OCI-LY7 (cell line): ENCODE measurements at regions of chr1 and their contacts with region 1.

Region 1: GRCh38 chr1:153572569-153573015 is 6.9 kb upstream of the S100A2 start:
- DNase-seq: peak; percentile 83
- H3K4me3 ChIP-seq: no peak overlapping the region
- H3K27ac ChIP-seq: no peak overlapping the region
- H3K4me1 ChIP-seq: peaks cover 17% of the 10 kb centered on the region
- CTCF ChIP-seq: peak; percentile 95

Region 2: DNA sequence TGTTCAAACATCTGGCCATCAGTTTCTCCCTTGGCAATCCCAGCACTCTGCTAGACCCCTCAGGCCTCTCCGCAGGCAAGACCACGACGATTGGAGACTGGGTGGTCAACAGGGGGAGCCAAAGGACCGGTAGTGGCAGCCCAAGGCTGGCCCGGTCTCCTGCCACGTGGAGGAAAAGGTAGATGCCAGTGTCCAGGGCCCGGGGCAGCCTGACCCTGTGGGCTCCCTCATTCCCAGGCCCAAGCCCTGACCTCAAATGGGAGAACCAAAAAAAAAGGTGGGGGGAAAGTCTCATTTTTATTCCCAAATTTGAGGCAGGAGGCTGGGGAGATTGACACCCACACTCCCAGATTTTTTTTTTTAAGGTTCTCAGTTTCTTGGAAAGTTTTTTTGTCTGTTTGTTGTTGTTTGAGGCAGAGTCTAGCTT is 61.6 kb before region 1 on chr1:
- CTCF ChIA-PET with region 1: interaction called, 3 read pairs
- POLR2A ChIA-PET with region 1: interaction called, 6 read pairs
- intact Hi-C with region 1: loop called (anchors 1 kb)
- DNase-seq: peak; percentile 77
- H3K4me3 ChIP-seq: no peak overlapping the region
- H3K27ac ChIP-seq: no peak overlapping the region
- H3K4me1 ChIP-seq: no peaks in the 10 kb centered on the region
- CTCF ChIP-seq: peak; percentile 96

Region 3: DNA sequence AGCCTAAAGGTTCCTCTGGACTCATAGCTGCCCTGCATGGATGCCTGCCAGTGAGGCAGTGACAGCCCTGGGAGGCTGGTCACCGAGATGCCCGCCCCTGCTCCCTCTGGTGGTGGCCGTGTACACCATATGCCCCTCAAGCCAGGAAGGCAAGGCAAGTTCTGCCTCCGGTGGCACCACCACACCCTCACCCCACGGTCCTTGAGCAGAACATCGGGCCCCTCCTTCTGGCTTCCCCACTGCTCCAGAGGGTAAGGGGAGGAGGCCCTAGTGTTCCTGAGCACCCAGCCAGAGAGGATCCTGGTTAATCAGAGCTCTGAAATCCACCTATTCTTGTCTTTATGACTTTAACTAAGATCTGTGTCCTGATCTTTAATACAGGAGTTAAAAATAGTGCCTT is 45.1 kb after region 1 on chr1:
- CTCF ChIA-PET with region 1: interaction called, 5 read pairs
- POLR2A ChIA-PET with region 1: interaction called, 4 read pairs
- intact Hi-C with region 1: loop called (anchors 1 kb)
- DNase-seq: peak; percentile 66
- H3K4me3 ChIP-seq: no peak overlapping the region
- H3K27ac ChIP-seq: no peak overlapping the region
- H3K4me1 ChIP-seq: peaks cover 8% of the 10 kb centered on the region
- CTCF ChIP-seq: peak; percentile 69

Region 4: DNA sequence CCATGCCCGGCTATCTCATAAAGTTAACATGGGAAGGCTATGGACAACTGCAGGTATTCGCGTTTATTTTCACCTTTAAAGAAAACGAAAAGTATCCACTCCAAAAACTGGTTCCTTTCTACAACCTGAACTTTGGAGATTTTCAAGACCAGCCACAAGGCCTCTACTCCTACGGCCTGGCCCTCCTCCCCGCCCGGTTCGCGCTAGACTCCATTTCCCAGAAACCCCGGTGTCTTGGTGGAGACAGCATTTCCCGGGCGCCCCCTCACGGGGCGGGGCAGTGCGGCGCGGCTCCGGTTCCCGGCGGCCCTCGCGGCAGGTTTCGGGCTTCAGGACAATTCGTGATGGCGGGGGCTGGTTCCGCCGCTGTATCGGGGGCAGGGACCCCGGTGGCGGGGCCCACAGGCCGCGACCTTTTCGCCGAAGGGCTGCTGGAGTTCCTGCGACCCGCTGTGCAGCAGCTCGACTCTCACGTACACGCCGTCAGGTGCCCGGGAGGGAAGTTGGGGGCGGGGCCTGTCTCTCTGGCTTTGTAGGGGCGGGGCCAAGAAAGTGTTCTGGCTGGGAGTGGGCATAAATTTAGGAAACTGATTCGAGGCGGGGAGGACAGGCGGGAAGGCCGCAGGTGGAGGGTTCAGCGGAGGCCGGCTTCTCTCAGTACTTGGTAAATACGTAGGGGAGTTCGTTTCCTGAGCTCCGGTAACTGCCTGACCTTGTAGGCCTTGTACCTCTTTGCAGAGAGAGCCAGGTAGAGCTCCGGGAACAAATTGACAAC is 86.0 kb after region 1 on chr1 and contains the start of gene SNAPIN:
- CTCF ChIA-PET with region 1: no interaction called
- POLR2A ChIA-PET with region 1: interaction called, 5 read pairs
- intact Hi-C with region 1: loop called (anchors 5 kb)
- DNase-seq: peak; percentile 91
- H3K4me3 ChIP-seq: peak within 1 kb of the TSS; percentile 96
- H3K27ac ChIP-seq: peak within 1 kb of the TSS; percentile 68
- H3K4me1 ChIP-seq: peaks cover 18% of the 10 kb centered on the region
- CTCF ChIP-seq: 0 out of 2 replicates have a peak, but pooled peaks have one; percentile 24
- total RNA-seq, gene SNAPIN: 33.2 and 44.5 TPM in 2 replicates

Region 5: DNA sequence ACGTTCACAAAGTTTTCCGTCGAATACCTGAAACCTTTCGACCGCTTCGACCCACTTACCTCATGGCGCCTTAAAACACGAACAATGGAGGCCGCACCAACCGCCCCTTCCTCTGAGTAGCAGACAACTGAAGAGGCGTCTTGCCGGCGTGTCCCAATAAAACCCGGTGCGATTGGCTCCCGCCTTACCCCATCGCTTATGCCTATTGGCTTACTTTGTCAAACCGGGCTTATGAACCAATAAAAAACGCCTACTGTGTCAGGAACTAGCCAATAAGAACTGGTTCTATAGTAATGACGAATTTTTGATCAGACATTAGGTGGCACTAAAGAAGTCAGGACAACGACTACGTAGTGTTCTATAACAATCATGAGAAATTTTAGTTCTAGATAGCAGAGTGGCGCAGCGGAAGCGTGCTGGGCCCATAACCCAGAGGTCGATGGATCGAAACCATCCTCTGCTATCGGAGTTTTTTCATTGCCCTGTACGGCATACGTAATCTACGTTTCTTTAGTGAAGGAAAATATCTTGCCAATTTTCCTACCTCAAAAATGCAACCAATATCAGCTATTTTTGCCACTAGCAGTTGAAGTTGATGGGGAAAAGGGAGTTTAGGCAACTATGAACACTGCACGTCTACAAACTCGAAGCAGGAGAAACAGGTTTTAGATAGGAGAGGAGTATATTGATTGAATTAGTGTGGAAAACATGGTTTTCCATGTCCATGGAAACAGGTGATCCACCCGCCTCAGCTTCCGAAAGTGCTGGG is 98.5 kb after region 1 on chr1 and contains the start of gene ILF2:
- CTCF ChIA-PET with region 1: no interaction called
- POLR2A ChIA-PET with region 1: no interaction called
- intact Hi-C with region 1: loop called (anchors 5 kb)
- DNase-seq: peak; percentile 100
- H3K4me3 ChIP-seq: peak within 1 kb of the TSS; percentile 97
- H3K27ac ChIP-seq: peak within 1 kb of the TSS; percentile 78
- H3K4me1 ChIP-seq: peaks cover 28% of the 10 kb centered on the region
- CTCF ChIP-seq: peak; percentile 69
- total RNA-seq, gene ILF2: 287 and 300 TPM in 2 replicates

Region 6: DNA sequence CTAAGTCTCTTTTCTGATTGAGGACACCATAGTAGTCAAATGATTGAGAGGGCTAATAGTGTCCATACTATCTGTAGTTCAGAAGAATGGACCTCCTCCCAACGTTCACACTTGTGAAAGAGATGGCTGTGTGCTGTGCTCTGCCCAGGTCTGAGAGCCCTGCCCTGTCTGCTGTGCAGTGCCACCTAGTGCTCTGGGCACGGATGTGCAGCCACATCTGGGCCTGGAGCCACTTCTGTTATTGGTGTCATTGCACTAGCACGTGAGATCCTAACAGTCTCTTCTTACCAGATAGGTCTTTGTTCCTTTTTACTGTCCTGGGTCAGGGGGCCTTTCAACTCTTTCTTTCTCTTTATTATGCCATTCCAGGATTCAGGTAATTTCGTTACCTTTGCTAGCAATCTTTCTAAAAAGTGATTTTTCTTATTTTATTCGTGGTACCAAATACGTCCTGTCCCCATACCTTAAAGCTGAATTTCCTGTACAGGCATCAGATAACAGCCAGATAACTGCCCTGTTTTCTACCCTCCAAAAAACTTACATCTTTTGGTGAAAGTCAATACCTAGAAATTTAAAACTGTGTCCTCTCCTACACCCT is 176.9 kb after region 1 on chr1:
- CTCF ChIA-PET with region 1: no interaction called
- POLR2A ChIA-PET with region 1: interaction called, 3 read pairs
- intact Hi-C with region 1: loop called (anchors 1 kb)
- DNase-seq: peak; percentile 82
- H3K4me3 ChIP-seq: no peak overlapping the region
- H3K27ac ChIP-seq: no peak overlapping the region
- H3K4me1 ChIP-seq: no peaks in the 10 kb centered on the region
- CTCF ChIP-seq: peak; percentile 96

Region 7: DNA sequence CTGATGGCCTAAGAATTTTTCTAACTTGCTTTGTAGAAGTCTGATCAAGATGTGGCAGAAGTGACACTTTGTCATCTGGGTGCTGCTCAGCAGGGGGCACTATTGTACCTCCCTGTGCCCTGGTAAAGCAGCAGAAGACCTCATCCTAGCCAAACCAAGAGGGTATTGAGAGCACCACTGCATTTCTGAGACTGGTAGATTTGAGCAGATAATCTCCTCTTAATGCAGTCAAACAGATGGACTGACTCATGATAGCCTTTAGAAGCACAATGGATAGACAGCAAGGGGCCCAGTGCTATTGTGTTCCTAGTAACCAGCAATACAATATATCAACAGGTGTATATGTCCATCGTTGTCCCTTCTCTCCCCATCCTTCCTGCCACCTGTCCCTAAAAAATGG is 613.6 kb after region 1 on chr1:
- CTCF ChIA-PET with region 1: no interaction called
- POLR2A ChIA-PET with region 1: no interaction called
- intact Hi-C with region 1: no loop called
- DNase-seq: peak; percentile 67
- H3K4me3 ChIP-seq: no peak overlapping the region
- H3K27ac ChIP-seq: no peak overlapping the region
- H3K4me1 ChIP-seq: peaks cover 5% of the 10 kb centered on the region
- CTCF ChIP-seq: peak; percentile 84